ENCODE measurements at regions of chr17 and their contacts with region 1.

Region 1: DNA sequence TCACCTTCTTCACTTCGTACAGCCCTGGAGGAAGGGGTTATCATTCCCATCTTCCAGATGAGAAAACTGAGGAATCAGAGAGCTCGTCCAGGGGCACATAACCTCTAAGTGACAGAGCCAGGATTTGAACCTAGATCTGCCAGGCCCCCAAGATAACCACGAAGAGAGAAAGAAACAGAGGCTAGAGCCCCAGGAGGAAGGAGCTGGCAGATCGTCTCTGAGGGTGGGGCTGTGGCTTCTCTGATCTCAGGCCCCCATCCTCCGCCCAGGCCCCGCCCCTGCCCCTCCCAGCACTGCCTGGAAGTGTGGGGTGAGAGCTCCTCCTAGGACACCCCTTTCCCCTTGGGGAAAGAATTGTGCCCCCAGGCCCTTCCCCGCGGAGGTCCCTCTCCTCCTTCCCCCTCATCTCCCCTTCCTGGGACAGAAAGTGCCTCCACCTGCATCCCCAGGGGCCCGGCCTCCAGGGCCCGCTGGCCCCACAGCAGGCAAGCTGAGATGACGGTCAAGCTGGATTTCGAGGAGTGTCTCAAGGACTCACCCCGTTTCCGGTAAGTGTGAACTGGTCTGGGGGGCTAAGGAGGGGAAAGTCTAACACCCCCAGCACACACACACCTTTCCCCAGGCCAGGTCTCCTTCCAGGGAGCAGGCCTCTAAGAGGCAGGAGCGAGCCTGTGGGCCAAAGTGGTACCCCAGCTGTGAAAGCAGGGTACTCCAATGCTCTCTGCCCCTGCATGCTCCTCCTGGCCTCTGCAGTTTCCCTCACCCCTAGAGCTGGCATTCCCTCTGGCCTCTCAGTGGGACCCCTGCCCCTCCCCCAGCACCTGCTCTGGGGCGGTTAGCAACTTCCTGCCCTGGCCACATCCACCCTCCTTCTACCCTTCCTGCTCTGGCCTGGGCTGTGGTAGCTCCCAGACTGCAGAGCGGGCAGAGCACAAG is at the start of gene ACAP1:
- DNase-seq: peak; percentile 78 to 90 (median 81)
- H3K4me3 ChIP-seq: peak within 1 kb of the TSS; percentile 94 to 98
- H3K4me3 Mint-ChIP-seq: peak within 1 kb of the TSS; percentile 88 to 99 (median 98)
- H3K27ac ChIP-seq: peak within 1 kb of the TSS; percentile 74
- H3K27ac Mint-ChIP-seq: peak within 1 kb of the TSS; percentile 89 to 99 (median 97)
- H3K4me1 ChIP-seq: peaks cover 81% of the 10 kb centered on the region
- H3K4me1 Mint-ChIP-seq: peaks cover 38 to 75% (median 56%) of the 10 kb centered on the region in 4 donors
- H3K27me3 ChIP-seq: no peaks in the 10 kb centered on the region
- H3K27me3 Mint-ChIP-seq: no peaks in the 10 kb centered on the region
- total RNA-seq, gene ACAP1: 507 to 516 TPM

Region 2: DNA sequence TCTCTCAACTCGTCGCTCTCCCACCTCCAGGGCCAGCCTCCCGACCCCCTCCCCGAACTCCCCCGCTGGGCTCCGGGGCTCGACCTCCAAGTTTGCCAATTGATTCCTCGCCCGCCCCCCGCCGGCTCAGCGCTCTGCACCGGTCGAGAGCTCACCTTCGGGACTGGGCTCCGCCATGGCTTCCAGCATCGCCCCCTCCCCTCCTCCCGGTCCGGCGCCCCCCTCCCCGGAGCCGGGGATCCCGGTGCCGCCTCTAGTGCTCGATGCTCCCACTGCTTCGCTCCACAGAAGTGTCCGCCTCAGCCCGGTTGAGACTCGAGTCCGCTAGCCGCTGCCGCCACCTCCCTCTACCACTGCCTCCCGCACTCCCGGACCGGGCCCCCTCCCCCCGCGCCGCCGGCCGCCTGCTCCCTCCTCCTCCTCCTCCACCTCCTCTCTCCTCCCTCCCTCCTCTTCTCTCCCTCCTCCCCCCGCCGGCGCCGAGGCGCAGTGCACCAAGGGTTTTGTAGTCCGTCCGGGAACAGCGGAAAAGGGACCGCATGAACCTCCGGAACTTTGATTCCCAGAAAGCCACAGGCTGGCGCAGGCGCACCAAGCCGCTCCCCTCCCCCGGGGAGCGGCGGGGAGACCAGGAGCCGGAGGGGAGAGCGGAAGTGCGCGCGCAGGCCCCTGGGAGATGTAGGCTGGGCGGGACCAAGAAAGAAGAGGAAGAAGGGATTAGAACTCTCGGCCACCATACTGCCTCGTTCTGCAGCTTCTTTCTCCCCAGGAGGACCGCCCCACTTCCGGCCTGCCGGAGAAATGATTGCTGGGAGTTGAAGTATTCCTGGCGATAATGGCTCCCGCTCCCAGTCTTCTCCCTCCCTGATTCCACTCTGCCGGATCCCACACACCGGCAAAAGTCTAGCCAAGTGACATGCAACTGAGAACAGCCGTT is 97.1 kb before region 1 on chr17 and contains the start of gene PHF23:
- CTCF ChIA-PET with region 1: interaction called, 4 read pairs
- POLR2A ChIA-PET with region 1: interaction called, 11 read pairs
- intact Hi-C with region 1: no loop called
- DNase-seq: peak; percentile 97 to 98 (median 98)
- H3K4me3 ChIP-seq: peak within 1 kb of the TSS; percentile 85 to 86
- H3K4me3 Mint-ChIP-seq: peak within 1 kb of the TSS; percentile 94 to 99 (median 96)
- H3K27ac ChIP-seq: peak within 1 kb of the TSS; percentile 85
- H3K27ac Mint-ChIP-seq: peak within 1 kb of the TSS; percentile 90 to 100 (median 98)
- H3K4me1 ChIP-seq: peaks cover 61% of the 10 kb centered on the region
- H3K4me1 Mint-ChIP-seq: peaks cover 41 to 75% (median 54%) of the 10 kb centered on the region in 4 donors
- H3K27me3 ChIP-seq: no peaks in the 10 kb centered on the region
- H3K27me3 Mint-ChIP-seq: peaks cover 0 to 2% of the 10 kb centered on the region in 2 donors
- total RNA-seq, gene PHF23: 45.8 to 55.8 TPM

Region 3: DNA sequence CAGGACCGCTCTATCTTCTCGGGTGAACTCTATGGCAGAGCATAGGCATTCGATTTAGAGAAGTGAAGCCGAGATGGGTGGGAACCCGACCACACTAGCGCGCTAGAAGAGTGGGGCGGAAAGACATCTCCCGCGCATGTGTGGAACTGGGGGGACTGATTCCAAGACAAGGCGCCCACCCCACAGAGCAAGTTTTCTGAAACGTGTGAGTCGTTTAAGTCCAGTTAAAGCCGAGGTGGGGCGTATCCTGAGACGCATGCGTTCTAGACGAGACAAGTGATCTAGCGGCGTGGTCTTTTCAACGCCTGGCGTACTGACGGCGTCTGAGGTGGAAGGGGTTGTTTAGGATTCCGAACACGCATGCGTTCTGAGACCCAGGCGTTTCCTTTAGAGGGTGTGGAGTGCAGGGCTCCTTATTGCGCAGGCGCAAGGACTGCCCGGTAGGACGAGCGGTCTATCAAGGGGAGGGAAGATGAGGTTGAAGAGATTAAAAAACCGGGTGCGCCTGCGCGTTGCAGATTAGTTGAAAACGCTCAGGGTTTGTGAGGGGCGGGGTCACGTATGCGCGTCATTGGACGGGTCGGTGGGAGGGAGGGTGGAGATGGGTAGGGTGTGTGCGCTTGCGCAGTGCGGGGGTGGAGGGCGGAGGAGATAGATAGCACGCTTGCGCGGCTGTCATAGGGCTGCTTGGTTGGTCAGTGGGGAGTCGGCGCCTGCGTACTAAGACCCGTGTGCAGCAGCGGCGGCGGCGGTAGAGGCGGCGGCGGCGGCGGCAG is 29.4 kb before region 1 on chr17 and contains the start of gene EIF5A:
- CTCF ChIA-PET with region 1: interaction called, 14 read pairs
- POLR2A ChIA-PET with region 1: interaction called, 187 read pairs
- intact Hi-C with region 1: loop called (anchors 2 kb)
- DNase-seq: peak; percentile 99 to 100 (median 100)
- H3K4me3 ChIP-seq: peak within 1 kb of the TSS; percentile 81 to 85
- H3K4me3 Mint-ChIP-seq: peak within 1 kb of the TSS; percentile 93 to 97 (median 95)
- H3K27ac ChIP-seq: peak within 1 kb of the TSS; percentile 100
- H3K27ac Mint-ChIP-seq: peak within 1 kb of the TSS; percentile 99 to 100 (median 99)
- H3K4me1 ChIP-seq: peaks cover 35% of the 10 kb centered on the region
- H3K4me1 Mint-ChIP-seq: peaks cover 29 to 47% (median 36%) of the 10 kb centered on the region in 4 donors
- H3K27me3 ChIP-seq: no peaks in the 10 kb centered on the region
- H3K27me3 Mint-ChIP-seq: peaks cover 0 to 4% of the 10 kb centered on the region in 2 donors
- total RNA-seq, gene EIF5A: 240 to 244 TPM

Region 4: DNA sequence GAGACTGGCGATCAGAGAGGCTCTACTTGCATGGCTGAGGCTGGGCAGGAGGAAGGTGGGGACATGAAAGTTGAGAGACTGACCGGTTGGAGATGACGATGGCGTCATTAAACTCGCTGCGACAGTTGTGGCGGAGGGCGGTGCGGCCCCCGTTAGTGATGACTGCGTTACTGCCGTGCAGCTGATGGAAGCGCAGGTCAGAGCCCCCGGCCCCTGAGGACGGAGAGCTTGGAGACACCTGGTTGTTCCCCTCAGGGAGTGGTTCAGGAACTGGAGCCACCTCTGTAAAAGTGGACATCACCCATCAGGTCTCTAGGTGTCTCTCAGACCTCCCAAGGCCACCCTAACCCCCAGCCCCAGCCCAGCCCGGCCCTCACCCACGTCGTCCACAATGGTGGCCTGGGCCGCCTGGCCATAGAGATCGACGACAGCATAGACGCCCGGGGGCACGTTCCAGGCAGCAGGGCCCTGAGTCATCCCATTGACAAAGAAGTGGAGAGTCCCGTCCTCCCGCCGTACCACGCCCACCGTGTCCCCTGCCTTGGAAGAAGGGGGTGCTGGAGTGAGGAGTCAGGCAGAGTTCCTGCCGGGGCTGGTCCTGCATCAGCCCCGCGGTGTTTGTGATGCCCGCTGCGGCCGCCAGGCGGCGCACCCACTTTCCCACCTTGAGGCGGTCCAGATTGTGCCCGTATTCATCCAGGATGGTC is 12.6 kb before region 1 on chr17:
- CTCF ChIA-PET with region 1: interaction called, 115 read pairs
- POLR2A ChIA-PET with region 1: interaction called, 61 read pairs
- intact Hi-C with region 1: loop called (anchors 1 kb)
- DNase-seq: peak; percentile 50 to 72 (median 56)
- H3K4me3 ChIP-seq: no peak overlapping the region
- H3K4me3 Mint-ChIP-seq: no peak overlapping the region
- H3K27ac ChIP-seq: no peak overlapping the region
- H3K27ac Mint-ChIP-seq: peak overlapping the region in 3 of 7 donors; percentile 18 to 78 (median 55)
- H3K4me1 ChIP-seq: peaks cover 20% of the 10 kb centered on the region
- H3K4me1 Mint-ChIP-seq: peaks cover 17 to 28% (median 18%) of the 10 kb centered on the region in 4 donors
- H3K27me3 ChIP-seq: no peaks in the 10 kb centered on the region
- H3K27me3 Mint-ChIP-seq: no peaks in the 10 kb centered on the region

Region 5: GRCh38 chr17:7403977-7404736 is 67.6 kb after region 1 on chr17 and contains the start of gene TMEM256:
- CTCF ChIA-PET with region 1: no interaction called
- POLR2A ChIA-PET with region 1: interaction called, 15 read pairs
- intact Hi-C with region 1: loop called (anchors 1 kb)
- DNase-seq: peak; percentile 91 to 98 (median 94)
- H3K4me3 ChIP-seq: peak within 1 kb of the TSS; percentile 73 to 77
- H3K4me3 Mint-ChIP-seq: peak within 1 kb of the TSS; percentile 93 to 98 (median 97)
- H3K27ac ChIP-seq: peak within 1 kb of the TSS; percentile 51
- H3K27ac Mint-ChIP-seq: peak within 1 kb of the TSS; percentile 89 to 99 (median 98)
- H3K4me1 ChIP-seq: peaks cover 17% of the 10 kb centered on the region
- H3K4me1 Mint-ChIP-seq: peaks cover 16 to 40% (median 18%) of the 10 kb centered on the region in 4 donors
- H3K27me3 ChIP-seq: no peaks in the 10 kb centered on the region
- H3K27me3 Mint-ChIP-seq: peaks cover 2% of the 10 kb centered on the region in 2 donors
- total RNA-seq, gene TMEM256: 35.4 to 38.3 TPM

Region 6: DNA sequence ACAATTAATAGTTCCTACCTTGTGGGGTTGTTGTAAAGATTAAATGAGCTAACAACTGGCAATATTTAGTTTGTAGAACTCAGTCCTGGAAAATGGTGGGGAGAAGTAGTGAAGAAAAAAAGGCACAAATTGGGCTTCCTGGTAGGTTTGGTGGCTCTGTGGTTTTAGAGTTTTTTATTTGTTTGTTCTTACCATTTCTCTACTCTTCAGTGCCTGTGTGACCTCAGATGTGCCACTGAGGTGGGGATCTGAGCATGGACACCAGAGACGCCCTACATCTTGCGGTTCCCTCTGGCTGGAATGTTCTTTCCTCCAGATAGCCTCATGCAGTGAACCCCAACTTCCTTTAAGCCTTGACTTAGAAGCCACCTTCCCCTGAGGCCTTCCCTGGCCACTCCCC is 135.2 kb after region 1 on chr17:
- CTCF ChIA-PET with region 1: no interaction called
- POLR2A ChIA-PET with region 1: no interaction called
- intact Hi-C with region 1: no loop called
- DNase-seq: no peak
- H3K4me3 ChIP-seq: no peak overlapping the region
- H3K4me3 Mint-ChIP-seq: peak overlapping the region in 1 of 8 donors; percentile 26
- H3K27ac ChIP-seq: no peak overlapping the region
- H3K27ac Mint-ChIP-seq: peak overlapping the region in 5 of 7 donors; percentile 15 to 71 (median 65)
- H3K4me1 ChIP-seq: peaks cover 31% of the 10 kb centered on the region
- H3K4me1 Mint-ChIP-seq: peaks cover 18 to 55% (median 26%) of the 10 kb centered on the region in 4 donors
- H3K27me3 ChIP-seq: no peaks in the 10 kb centered on the region
- H3K27me3 Mint-ChIP-seq: no peaks in the 10 kb centered on the region

Region 7: DNA sequence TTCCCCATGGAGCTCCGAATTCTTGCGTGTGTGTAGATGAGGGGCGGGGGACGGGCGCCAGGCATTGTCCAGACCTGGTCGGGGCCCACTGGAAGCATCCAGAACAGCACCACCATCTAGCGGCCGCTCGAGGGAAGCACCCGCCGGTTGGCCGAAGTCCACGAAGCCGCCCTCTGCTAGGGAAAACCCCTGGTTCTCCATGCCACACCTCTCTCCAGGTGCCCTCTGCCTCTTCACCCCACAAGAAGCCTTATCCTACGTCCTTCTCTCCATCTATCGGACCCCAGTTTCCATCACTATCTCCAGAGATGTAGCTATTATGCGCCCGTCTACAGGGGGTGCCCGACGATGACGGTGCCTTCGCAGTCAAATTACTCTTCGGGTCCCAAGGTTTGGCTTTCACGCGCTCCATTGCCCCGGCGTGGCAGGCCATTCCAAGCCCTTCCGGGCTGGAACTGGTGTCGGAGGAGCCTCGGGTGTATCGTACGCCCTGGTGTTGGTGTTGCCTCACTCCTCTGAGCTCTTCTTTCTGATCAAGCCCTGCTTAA is 224.6 kb after region 1 on chr17:
- CTCF ChIA-PET with region 1: interaction called, 6 read pairs
- POLR2A ChIA-PET with region 1: interaction called, 12 read pairs
- intact Hi-C with region 1: no loop called
- DNase-seq: peak; percentile 75 to 85 (median 76)
- H3K4me3 ChIP-seq: peak overlapping the region; percentile 72 to 84
- H3K4me3 Mint-ChIP-seq: peak overlapping the region; percentile 89 to 98 (median 94)
- H3K27ac ChIP-seq: peak overlapping the region; percentile 96
- H3K27ac Mint-ChIP-seq: peak overlapping the region; percentile 95 to 99 (median 97)
- H3K4me1 ChIP-seq: peaks cover 37% of the 10 kb centered on the region
- H3K4me1 Mint-ChIP-seq: peaks cover 25 to 37% (median 30%) of the 10 kb centered on the region in 4 donors
- H3K27me3 ChIP-seq: no peaks in the 10 kb centered on the region
- H3K27me3 Mint-ChIP-seq: no peaks in the 10 kb centered on the region